SK-N-SH (cell line): ENCODE measurements at regions of chr16 and their contacts with region 1.

Region 1: DNA sequence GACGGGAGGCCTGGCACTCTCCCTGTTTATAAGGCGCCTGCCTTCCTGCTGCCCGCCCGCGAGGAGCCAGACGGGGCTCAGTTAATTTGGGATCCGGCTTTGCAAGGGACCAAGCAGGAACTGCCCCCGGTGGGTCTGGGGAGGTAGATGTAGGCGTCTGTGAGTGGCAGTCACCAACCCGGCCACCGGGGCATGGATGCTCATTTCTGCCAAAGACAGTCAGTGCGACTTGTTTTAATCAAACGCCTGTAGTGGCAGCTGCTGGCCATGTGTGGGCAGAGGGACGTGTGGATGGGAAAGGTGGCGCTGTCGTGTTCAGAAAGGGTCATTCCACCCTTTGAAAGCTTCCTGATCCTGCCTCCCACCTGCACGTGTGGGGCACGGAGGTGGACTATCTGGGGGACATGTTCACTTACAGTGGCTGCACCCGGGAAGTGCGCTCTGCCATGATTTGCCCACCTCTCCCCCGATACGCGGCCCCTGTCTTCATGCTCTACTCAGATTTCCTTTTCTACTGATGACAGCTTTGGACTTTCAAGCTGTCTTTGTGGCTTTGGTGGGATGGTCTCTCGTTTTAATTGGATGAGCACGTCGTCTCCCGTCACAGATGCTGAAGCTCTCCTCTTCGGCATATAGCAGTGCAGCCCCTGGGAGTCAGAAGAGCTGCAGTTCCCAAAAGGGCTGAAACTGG is 60.3 kb upstream of the CIBAR2 start:
- DNase-seq: peak; percentile 83
- H3K4me3 ChIP-seq: peak overlapping the region; percentile 52 to 65
- H3K27ac ChIP-seq: peak overlapping the region; percentile 88 to 97
- H3K4me1 ChIP-seq: peaks cover 26 to 73% of the 10 kb centered on the region in 2 experiments
- H3K27me3 ChIP-seq: no peaks in the 10 kb centered on the region
- CTCF ChIP-seq: peak; percentile 53
- EP300 ChIP-seq: no peak
- RAD21 ChIP-seq: peak; percentile 44

Region 2: GRCh38 chr16:85151603-85152413 is 20.8 kb before region 1 on chr16:
- CTCF ChIA-PET with region 1: interaction called, 14 read pairs
- POLR2A ChIA-PET with region 1: interaction called, 4 read pairs
- DNase-seq: peak; percentile 93
- H3K4me3 ChIP-seq: no peak overlapping the region
- H3K27ac ChIP-seq: peak overlapping the region; percentile 57 to 89
- H3K4me1 ChIP-seq: peaks cover 6 to 54% of the 10 kb centered on the region in 2 experiments
- H3K27me3 ChIP-seq: no peaks in the 10 kb centered on the region
- CTCF ChIP-seq: no peak
- EP300 ChIP-seq: peak; percentile 56 to 83; a peak in 3 of 4 replicates
- RAD21 ChIP-seq: peak; percentile 25; the same call in 1 of the 2 replicates

Region 3: GRCh38 chr16:85195900-85196772 is 23.5 kb after region 1 on chr16:
- CTCF ChIA-PET with region 1: interaction called, 43 read pairs
- POLR2A ChIA-PET with region 1: no interaction called
- DNase-seq: peak; percentile 70
- H3K4me3 ChIP-seq: no peak overlapping the region
- H3K27ac ChIP-seq: peak overlapping the region in 1 of 2 experiments; percentile 79; a peak in 2 of 4 replicates
- H3K4me1 ChIP-seq: peaks cover 0 to 43% of the 10 kb centered on the region in 2 experiments; a peak in 2 of 4 replicates
- H3K27me3 ChIP-seq: no peaks in the 10 kb centered on the region
- CTCF ChIP-seq: no peak
- EP300 ChIP-seq: peak in 1 of 2 experiments; percentile 76; a peak in 2 of 4 replicates
- RAD21 ChIP-seq: no peak

Region 4: GRCh38 chr16:85220125-85220839 is 47.7 kb after region 1 on chr16:
- CTCF ChIA-PET with region 1: interaction called, 42 read pairs
- POLR2A ChIA-PET with region 1: interaction called, 4 read pairs
- DNase-seq: peak; percentile 92
- H3K4me3 ChIP-seq: peak overlapping the region; percentile 15 to 37
- H3K27ac ChIP-seq: peak overlapping the region; percentile 77 to 93
- H3K4me1 ChIP-seq: peaks cover 8 to 51% of the 10 kb centered on the region in 2 experiments
- H3K27me3 ChIP-seq: no peaks in the 10 kb centered on the region
- CTCF ChIP-seq: no peak
- EP300 ChIP-seq: peak; percentile 66 to 71; a peak in 2 of 4 replicates
- RAD21 ChIP-seq: no peak; the same call in 1 of the 2 replicates

Region 5: DNA sequence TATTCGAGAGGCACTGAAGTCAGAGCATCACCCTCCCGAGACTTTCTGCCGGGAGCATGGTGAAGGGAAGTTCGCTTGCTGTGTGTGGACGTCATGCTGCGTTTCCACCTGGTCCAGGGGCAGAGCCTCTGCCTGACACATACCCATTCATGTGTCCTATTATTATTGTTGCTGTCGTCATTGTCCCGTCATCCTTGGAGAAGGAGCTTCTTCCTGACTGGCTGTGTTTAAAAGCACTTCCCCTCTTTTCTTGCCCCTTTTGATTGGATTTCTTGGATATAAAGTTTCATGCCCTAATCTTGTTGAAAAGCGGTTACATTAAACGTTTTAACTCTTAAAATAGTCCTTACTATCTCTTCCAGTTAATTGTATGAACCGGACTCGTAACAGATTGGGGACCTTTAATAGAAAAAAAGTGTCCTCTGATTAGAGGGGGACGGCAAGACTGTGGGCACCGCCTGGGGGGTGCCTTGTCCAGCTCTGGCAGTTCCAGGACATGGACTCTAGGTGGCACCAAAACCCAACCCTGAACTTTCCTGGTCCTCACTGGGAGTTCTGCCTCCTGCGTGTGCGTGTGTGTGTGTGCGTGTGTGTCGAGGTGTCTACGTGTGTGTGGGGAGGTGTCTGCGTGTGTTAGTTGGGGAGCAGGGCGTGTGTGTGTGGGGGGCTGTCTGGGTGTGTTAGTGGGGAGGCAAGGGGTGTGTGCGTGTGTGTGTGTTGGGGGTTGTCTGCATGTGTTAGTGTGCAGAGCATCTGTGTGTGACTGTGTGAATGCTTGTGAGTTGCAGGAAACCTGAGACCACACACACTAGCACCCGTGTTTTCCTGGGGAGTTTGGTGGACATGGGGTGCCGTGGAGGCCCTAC is 72.9 kb after region 1 on chr16:
- CTCF ChIA-PET with region 1: interaction called, 122 read pairs
- POLR2A ChIA-PET with region 1: no interaction called
- DNase-seq: peak; percentile 82
- H3K4me3 ChIP-seq: no peak overlapping the region; a peak in 1 of 4 replicates
- H3K27ac ChIP-seq: peak overlapping the region in 1 of 2 experiments; percentile 59; a peak in 2 of 4 replicates
- H3K4me1 ChIP-seq: peaks cover 0 to 56% of the 10 kb centered on the region in 2 experiments; a peak in 1 of 4 replicates
- H3K27me3 ChIP-seq: no peaks in the 10 kb centered on the region
- CTCF ChIP-seq: peak; percentile 88
- EP300 ChIP-seq: no peak
- RAD21 ChIP-seq: peak; percentile 89